Endothelial cell of umbilical vein (primary cell): ENCODE measurements at regions of chr2 and their contacts with region 1.

Region 1: DNA sequence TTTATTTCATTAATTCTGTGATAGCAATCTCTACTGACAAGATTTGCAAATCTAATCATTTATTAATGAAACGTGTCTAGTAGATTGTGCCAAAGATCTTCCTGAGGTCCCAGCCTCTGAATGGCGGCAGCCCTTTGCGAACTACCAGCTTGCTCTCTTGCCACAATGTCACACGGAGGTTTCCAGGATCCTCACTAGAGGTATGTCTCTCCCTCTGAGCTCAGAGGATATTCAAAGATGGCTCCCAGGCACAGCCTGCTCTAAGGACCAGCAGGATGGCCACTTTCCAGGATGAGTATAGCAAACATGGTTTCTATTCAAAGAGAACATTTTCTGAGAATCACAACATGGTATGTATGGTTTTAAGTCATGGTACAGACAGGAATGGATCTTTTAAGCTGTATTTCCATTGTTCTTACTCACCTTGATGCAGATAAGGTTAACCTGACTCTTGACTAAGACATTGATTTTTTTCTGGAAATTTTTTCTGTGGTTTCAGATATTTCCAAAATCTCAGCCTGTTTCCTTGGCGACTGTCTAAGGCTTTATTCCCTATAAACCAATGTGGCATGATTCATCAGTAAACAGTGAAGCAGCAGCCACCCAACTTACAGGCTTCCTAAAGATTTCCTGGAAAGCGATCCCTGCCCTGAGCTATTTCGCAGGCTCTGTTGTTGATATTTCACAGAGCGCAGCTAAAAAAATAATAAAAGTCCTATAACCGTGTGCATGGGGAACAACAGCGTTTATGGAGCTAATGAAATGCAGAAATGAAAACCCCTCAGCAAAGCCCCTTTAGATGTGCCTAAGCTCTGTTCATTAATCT is 54.1 kb upstream of the KLF7 start:
- DNase-seq: peak; percentile 64
- H3K4me3 ChIP-seq: no peak overlapping the region
- H3K27ac ChIP-seq: no peak overlapping the region
- H3K4me1 ChIP-seq: no peaks in the 10 kb centered on the region
- H3K27me3 ChIP-seq: no peaks in the 10 kb centered on the region
- CTCF ChIP-seq: no peak
- POLR2A ChIP-seq: no peak

Region 2: GRCh38 chr2:207160115-207160514 is 59.8 kb before region 1 on chr2:
- CTCF ChIA-PET with region 1: no interaction called
- POLR2A ChIA-PET with region 1: no interaction called
- dilution Hi-C with region 1: no loop called
- intact Hi-C with region 1: no loop called
- DNase-seq: peak; percentile 50
- H3K4me3 ChIP-seq: no peak overlapping the region
- H3K27ac ChIP-seq: no peak overlapping the region
- H3K4me1 ChIP-seq: peaks cover 79% of the 10 kb centered on the region
- H3K27me3 ChIP-seq: no peaks in the 10 kb centered on the region
- CTCF ChIP-seq: no peak
- POLR2A ChIP-seq: no peak

Region 3: DNA sequence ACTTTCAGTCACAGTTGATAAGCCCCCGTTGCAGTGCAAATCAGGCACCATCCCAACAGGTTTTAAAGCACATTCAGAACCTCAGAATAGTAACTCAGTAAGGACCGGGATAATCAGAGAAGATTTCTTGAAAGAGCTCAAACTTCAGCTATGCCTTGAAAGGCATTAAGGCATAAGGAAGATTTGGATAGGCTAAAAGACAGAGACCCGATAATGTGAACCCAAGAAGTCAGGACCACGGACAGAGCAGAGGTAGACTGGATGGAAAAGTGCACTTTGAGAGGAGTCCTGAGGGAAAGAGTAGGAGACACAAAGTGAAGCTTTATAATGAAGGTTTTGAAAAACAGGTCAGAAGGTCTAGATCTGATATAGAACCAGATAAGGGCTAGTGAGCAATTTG is 17.2 kb before region 1 on chr2:
- CTCF ChIA-PET with region 1: interaction called, 10 read pairs
- POLR2A ChIA-PET with region 1: interaction called, 3 read pairs
- dilution Hi-C with region 1: no loop called
- intact Hi-C with region 1: no loop called
- DNase-seq: peak; percentile 53
- H3K4me3 ChIP-seq: no peak overlapping the region
- H3K27ac ChIP-seq: no peak overlapping the region
- H3K4me1 ChIP-seq: no peaks in the 10 kb centered on the region
- H3K27me3 ChIP-seq: no peaks in the 10 kb centered on the region
- CTCF ChIP-seq: no peak
- POLR2A ChIP-seq: no peak